Activated CD4-positive, alpha-beta T cell treated with anti-CD3 and anti-CD28 coated beads, Interleukin-2, amount 10 ng/mL, durations not matched to agents 24 days and 14 days (primary cell): ENCODE measurements at regions of chr7 and their contacts with region 1.

Region 1: GRCh38 chr7:65037740-65038678 is 31.5 kb upstream of the ERV3-1 start:
- DNase-seq: peak; percentile 96
- H3K4me3 Mint-ChIP-seq: peak overlapping the region; percentile 82
- H3K27ac Mint-ChIP-seq: peak overlapping the region; percentile 86
- H3K4me1 Mint-ChIP-seq: peaks cover 11% of the 10 kb centered on the region
- H3K27me3 Mint-ChIP-seq: no peaks in the 10 kb centered on the region

Region 2: GRCh38 chr7:65006094-65006992 is 31.7 kb before region 1 on chr7 and contains the start of gene ERV3-1:
- intact Hi-C with region 1: loop called (anchors 1 kb)
- DNase-seq: peak; percentile 97
- H3K4me3 Mint-ChIP-seq: peak within 1 kb of the TSS; percentile 98
- H3K27ac Mint-ChIP-seq: peak within 1 kb of the TSS; percentile 95
- H3K4me1 Mint-ChIP-seq: peaks cover 26% of the 10 kb centered on the region
- H3K27me3 Mint-ChIP-seq: no peaks in the 10 kb centered on the region
- total RNA-seq, gene ERV3-1: 7.4 and 9.5 TPM in 2 replicates